IMR-90 (cell line): ENCODE measurements at regions of chr22 and their contacts with region 1.

Region 1: DNA sequence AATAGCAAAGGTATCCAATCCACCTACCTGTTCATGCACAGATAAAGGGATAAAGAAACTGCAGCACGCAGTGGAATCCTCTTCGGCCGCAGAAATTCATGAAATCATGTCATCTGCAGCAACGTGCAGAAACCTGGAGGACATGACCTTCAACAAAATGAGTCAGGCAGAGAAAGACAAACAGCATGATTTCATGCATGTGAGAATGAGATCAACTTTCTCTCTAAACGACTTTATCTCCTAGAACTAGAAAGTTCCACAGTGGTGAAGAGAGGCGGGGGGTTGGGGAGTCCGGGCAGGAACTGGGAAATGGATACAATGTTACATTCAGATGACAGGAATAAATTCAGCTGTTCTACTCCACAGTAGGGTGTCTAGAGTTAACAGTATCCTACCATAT is 9.9 kb downstream of the RGL4 start:
- DNase-seq: peak; percentile 64
- ATAC-seq: peak; percentile 10; the same call in 1 of the 2 replicates
- H3K4me3 ChIP-seq: no peak overlapping the region
- H3K27ac ChIP-seq: no peak overlapping the region
- H3K4me1 ChIP-seq: peaks cover 15% of the 10 kb centered on the region
- H3K27me3 ChIP-seq: no peaks in the 10 kb centered on the region
- CTCF ChIP-seq: no peak
- POLR2A ChIP-seq: no peak
- RAD21 ChIP-seq: no peak

Region 2: GRCh38 chr22:22928666-22929380 is 771.9 kb before region 1 on chr22:
- CTCF ChIA-PET with region 1: no interaction called
- POLR2A ChIA-PET with region 1: no interaction called
- dilution Hi-C with region 1: no loop called
- in situ Hi-C with region 1: no loop called
- intact Hi-C with region 1: no loop called
- DNase-seq: peak; percentile 16
- ATAC-seq: peak; percentile 40
- H3K4me3 ChIP-seq: no peak overlapping the region
- H3K27ac ChIP-seq: no peak overlapping the region
- H3K4me1 ChIP-seq: no peaks in the 10 kb centered on the region
- H3K27me3 ChIP-seq: no peaks in the 10 kb centered on the region
- CTCF ChIP-seq: no peak
- POLR2A ChIP-seq: no peak
- RAD21 ChIP-seq: no peak

Region 3: GRCh38 chr22:23673826-23674690 is 26.6 kb before region 1 on chr22:
- CTCF ChIA-PET with region 1: no interaction called
- POLR2A ChIA-PET with region 1: no interaction called
- dilution Hi-C with region 1: no loop called
- in situ Hi-C with region 1: no loop called
- intact Hi-C with region 1: loop called (anchors 5 kb)
- DNase-seq: no peak
- ATAC-seq: no peak
- H3K4me3 ChIP-seq: no peak overlapping the region
- H3K27ac ChIP-seq: no peak overlapping the region
- H3K4me1 ChIP-seq: no peaks in the 10 kb centered on the region
- H3K27me3 ChIP-seq: no peaks in the 10 kb centered on the region
- CTCF ChIP-seq: no peak
- POLR2A ChIP-seq: no peak
- RAD21 ChIP-seq: no peak

Region 4: GRCh38 chr22:23767673-23768548 is 67.2 kb after region 1 on chr22 and contains the start of gene CHCHD10:
- CTCF ChIA-PET with region 1: no interaction called
- POLR2A ChIA-PET with region 1: no interaction called
- dilution Hi-C with region 1: no loop called
- in situ Hi-C with region 1: no loop called
- intact Hi-C with region 1: no loop called
- DNase-seq: peak; percentile 50
- ATAC-seq: peak; percentile 57
- H3K4me3 ChIP-seq: peak within 1 kb of the TSS; percentile 43
- H3K27ac ChIP-seq: no peak within 1 kb of the TSS
- H3K4me1 ChIP-seq: peaks cover 10% of the 10 kb centered on the region
- H3K27me3 ChIP-seq: no peaks in the 10 kb centered on the region
- CTCF ChIP-seq: peak; percentile 75
- POLR2A ChIP-seq: no peak
- RAD21 ChIP-seq: peak; percentile 65
- total RNA-seq, gene CHCHD10: 1.4 and 2.2 TPM in 2 replicates